ENCODE measurements at regions of chr3 and their contacts with region 1.

Region 1: DNA sequence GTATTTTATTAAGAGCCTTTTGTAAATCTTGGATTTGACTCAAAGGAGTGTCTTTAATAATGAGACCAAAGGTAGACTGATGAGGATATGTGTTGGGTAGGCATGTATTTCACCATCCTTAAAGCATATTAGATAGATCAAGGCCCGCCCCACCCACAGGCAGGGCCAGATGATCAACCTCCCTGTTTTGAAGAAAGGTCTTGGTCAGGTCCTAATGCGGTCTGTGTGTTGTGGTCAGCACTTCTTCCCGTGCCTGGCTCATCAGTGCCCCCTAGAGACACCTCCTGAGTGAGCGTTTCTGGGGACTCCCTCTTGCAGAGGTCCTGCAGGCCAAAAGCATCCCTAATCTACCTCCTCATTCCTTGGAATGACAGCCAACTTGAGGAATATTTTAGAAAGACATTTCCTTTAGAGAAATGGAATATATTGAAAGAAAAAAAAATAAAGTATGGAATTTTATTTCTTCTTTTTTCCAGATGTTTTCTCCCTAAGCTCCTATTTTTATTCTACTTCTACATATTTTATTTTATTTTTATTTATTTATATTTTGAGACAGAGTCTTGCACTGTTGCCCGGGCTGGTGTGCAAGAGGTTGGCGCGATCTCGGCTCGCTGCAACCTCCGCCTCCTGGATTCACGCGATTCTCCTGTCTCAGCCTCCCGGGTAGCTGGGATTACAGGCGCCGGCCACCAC is 6.0 kb downstream of the TM4SF4 start:
- DNase-seq: peak; percentile 85
- ATAC-seq: peak; percentile 95

Region 2: GRCh38 chr3:149129326-149130205 is 350.9 kb before region 1 on chr3 and contains the start of gene HPS3:
- intact Hi-C with region 1: loop called (anchors 10 kb)
- DNase-seq: peak; percentile 98
- ATAC-seq: peak; percentile 98
- total RNA-seq, gene HPS3: 5.3 TPM

Region 3: DNA sequence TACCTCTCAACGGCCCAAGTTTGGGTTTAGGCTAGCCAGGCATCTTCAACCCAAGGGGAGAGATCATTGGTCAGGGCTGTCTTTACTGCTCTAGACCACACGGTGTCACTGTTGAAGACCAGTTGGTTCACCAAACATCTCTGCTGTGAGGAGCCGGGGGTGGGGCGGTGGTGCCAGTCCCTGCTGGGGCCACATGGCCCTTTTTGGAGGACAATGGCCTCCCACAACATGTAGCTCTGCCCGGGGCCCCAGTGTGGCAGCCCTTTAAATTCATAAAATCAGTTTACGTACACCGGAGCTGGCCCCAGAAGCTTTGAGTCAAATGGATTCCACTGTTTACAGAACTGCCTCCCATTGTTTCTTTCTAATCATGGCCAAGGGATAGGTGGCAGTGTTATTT is 127.9 kb before region 1 on chr3:
- intact Hi-C with region 1: loop called (anchors 1 kb)
- DNase-seq: peak; percentile 74
- ATAC-seq: peak; percentile 67

Region 4: GRCh38 chr3:149393345-149394160 is 86.9 kb before region 1 on chr3:
- intact Hi-C with region 1: loop called (anchors 1 kb)
- DNase-seq: peak; percentile 68
- ATAC-seq: peak; percentile 79

Measured in Right ventricle myocardium inferior (tissue), 1 donor.